Left ventricle myocardium inferior (tissue), 1 donor: ENCODE measurements at regions of chr12 and their contacts with region 1.

Region 1: DNA sequence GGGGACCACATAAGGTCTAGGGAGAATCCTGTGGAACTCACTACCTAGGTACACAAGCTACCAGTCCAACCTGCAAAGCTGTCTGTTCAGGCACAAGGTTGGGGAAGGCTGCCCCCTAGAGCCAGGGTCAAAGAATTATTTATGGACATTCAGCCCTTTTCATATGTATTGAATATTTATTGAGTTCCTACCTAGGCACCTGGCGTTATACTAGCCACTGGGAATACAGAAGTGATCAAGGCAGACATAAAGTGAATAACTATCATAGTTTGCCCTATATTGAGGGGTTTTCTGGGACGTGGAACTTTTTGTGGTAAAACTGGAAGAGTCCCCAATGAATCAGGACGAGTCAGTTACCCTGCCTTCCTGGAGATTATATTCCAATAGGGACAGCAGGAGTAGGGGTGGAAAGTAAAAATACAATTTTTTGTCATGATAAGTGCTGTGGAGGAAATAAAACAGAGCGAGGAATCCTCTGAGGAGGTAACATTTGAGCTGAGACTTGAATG is 5.8 kb upstream of the SLC48A1 start:
- DNase-seq: no peak
- H3K4me3 ChIP-seq: no peak overlapping the region
- H3K27ac ChIP-seq: no peak overlapping the region
- H3K4me1 ChIP-seq: peaks cover 55% of the 10 kb centered on the region
- H3K27me3 ChIP-seq: no peaks in the 10 kb centered on the region
- CTCF ChIP-seq: peak; percentile 76

Region 2: DNA sequence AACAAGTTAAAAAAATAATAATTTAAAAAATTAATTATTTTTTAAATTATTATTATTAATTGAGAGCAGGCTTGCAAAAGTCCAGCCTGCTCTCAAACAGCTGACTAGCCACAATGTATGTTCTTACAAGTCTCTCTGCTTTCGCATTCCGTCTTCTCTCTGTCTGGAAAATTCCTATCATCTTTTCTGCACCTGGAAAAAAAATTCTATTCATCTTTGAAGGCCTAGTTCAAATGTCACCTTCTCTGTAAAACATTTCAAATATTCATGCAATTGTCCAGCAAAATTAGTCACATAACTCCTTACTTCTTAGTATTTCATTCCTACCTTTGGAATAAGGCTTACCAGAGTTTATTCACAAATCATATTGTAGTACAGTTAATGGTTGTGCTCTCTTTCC is 137.0 kb before region 1 on chr12:
- intact Hi-C with region 1: no loop called
- DNase-seq: no peak
- H3K4me3 ChIP-seq: no peak overlapping the region
- H3K27ac ChIP-seq: no peak overlapping the region
- H3K4me1 ChIP-seq: no peaks in the 10 kb centered on the region
- H3K27me3 ChIP-seq: no peaks in the 10 kb centered on the region
- CTCF ChIP-seq: no peak

Region 3: DNA sequence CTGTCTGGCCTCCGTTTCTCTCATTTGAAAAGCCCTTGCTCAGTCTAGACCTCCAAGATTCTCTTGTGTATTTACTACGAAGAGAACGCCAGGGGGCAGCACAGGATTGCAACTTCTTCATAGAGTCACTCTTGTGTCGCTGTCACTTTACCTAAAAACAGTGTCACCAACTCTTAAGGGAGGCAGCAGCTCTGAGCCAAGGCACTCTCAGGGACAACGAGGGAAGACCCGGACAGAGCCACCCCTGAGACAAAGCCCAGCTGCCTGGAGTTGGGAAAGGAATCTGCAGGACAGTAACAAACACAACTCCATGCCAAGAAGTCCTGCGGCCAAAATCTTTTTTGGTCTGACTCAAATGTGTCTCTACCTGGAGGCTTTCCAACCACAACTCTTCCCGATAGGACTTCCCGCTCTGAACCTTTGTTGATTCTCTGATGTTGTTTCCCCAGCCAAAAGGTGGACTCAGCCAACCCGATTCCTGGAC is 51.8 kb before region 1 on chr12:
- intact Hi-C with region 1: loop called (anchors 5 kb)
- DNase-seq: peak; percentile 74
- H3K4me3 ChIP-seq: no peak overlapping the region
- H3K27ac ChIP-seq: peak overlapping the region; percentile 95
- H3K4me1 ChIP-seq: peaks cover 48% of the 10 kb centered on the region
- H3K27me3 ChIP-seq: no peaks in the 10 kb centered on the region
- CTCF ChIP-seq: peak; percentile 83

Region 4: DNA sequence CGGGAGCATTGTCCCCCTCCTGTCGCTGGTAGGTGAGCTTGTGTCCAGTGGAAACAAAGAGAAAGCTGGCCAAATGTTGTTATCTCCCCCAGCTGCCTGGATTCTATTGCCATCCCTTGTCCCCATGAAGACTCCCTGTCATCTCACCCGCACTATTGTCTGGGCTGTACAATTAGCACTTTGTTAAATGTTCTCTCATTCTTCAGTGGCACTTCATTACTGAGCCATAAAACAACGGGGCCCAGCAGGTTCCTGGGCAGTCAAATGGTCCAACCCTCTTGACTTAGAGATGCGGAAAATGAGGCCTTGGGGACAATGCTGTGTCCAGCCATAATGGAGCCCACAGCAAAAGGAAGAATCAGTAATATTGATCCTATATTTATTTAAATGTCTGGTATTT is 250.2 kb after region 1 on chr12:
- intact Hi-C with region 1: no loop called
- DNase-seq: no peak
- H3K4me3 ChIP-seq: no peak overlapping the region
- H3K27ac ChIP-seq: no peak overlapping the region
- H3K4me1 ChIP-seq: peaks cover 14% of the 10 kb centered on the region
- H3K27me3 ChIP-seq: peaks cover 15% of the 10 kb centered on the region
- CTCF ChIP-seq: no peak